Thyroid gland (tissue), 4 donors: ENCODE measurements at regions of chr1 and their contacts with region 1.

Region 1: GRCh38 chr1:61043010-61043820 is 39.1 kb upstream of the NFIA start:
- DNase-seq: peak; percentile 89 to 94
- H3K4me3 ChIP-seq: peak overlapping the region in 2 of 3 donors; percentile 11 to 64
- H3K27ac ChIP-seq: peak overlapping the region; percentile 25 to 91 (median 83)
- H3K4me1 ChIP-seq: peaks cover 3 to 8% of the 10 kb centered on the region in 2 donors
- H3K27me3 ChIP-seq: no peaks in the 10 kb centered on the region
- CTCF ChIP-seq: peak; percentile 77 to 92 (median 89)
- POLR2A ChIP-seq: peak in 1 of 2 donors; percentile 48

Region 2: GRCh38 chr1:59506952-59507351 is 1536.3 kb before region 1 on chr1:
- intact Hi-C with region 1: no loop called
- DNase-seq: peak in 1 of 2 donors; percentile 32
- H3K4me3 ChIP-seq: no peak overlapping the region
- H3K27ac ChIP-seq: peak overlapping the region in 1 of 3 donors; percentile 11
- H3K4me1 ChIP-seq: peaks cover 21 to 24% of the 10 kb centered on the region in 2 donors
- H3K27me3 ChIP-seq: no peaks in the 10 kb centered on the region
- CTCF ChIP-seq: no peak
- POLR2A ChIP-seq: no peak

Region 3: DNA sequence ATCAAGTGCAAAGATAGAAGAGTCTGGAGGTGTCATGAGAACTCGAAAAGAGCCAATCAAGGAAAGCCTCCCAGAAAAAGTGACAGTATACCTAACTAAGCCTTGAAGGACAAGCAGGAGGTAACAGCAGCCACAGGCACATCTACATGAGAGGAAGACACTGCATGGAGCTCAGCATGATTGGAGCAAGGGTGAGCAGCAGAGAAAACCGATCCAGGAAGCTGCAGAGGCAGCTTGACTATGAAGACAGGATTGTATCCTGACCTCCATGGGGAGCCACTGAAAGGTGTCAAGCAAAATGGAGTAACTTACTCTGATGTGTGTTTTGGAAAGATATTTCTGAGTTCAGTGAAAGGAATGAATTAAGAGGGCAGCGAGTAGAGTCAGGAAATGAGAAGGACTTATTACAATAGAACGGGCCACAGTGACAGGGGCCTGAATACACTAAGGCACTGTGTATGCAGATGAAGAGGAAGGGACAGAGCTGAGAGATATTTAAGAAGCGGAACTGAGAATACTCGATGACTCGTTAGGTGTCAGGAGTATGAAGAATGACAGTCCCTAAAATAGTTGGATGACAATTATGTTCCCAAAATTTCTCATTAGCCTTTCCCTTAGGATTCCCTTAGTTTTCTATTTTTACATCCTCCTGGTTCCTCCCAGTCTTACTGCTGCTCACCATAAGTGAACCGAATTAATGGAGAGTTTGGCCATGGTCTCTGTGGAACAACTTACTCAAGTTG is 100.1 kb before region 1 on chr1:
- intact Hi-C with region 1: no loop called
- DNase-seq: no peak
- H3K4me3 ChIP-seq: no peak overlapping the region
- H3K27ac ChIP-seq: no peak overlapping the region
- H3K4me1 ChIP-seq: peaks cover under 1 to 2% of the 10 kb centered on the region in 2 donors
- H3K27me3 ChIP-seq: no peaks in the 10 kb centered on the region
- CTCF ChIP-seq: no peak
- POLR2A ChIP-seq: no peak

Region 4: DNA sequence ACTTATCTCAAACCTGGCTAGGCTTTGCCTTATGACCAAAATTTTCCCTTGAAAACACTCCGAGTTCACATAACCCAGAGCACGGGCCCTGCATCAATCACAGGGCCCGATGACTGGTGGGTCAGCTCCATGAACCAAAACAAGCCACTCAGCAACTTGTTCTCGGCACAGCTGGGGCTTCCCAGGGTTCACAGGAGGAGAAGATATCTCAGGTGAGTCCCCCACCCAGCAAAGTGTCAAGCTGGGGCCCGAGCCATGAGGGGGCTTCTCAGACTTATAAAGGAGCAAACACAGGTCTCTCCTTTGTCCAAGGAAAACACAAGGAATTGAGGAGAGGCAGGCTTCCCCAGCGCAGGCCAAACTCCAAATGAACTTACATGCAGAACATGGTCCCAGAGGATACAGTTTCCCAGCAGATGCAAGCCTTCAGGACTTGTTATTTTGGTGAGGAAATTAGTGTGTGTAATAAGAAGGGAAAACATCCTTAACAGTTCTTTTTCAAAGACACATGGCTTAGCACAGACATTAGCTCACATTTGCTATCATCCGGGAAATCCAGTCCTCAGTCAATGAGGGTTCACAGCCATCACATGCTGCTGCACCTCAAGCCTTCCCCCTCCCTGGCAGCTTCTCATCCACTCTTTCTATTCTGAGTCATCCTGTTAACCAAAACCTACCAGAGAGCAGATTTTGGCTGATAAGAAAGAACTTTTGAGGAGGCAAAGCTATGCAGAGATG is 59.0 kb before region 1 on chr1:
- intact Hi-C with region 1: loop called (anchors 5 kb)
- DNase-seq: no peak
- H3K4me3 ChIP-seq: no peak overlapping the region
- H3K27ac ChIP-seq: peak overlapping the region in 2 of 3 donors; percentile 6 to 48
- H3K4me1 ChIP-seq: peaks cover 0 to 3% of the 10 kb centered on the region in 2 donors
- H3K27me3 ChIP-seq: no peaks in the 10 kb centered on the region
- CTCF ChIP-seq: no peak
- POLR2A ChIP-seq: no peak

Region 5: DNA sequence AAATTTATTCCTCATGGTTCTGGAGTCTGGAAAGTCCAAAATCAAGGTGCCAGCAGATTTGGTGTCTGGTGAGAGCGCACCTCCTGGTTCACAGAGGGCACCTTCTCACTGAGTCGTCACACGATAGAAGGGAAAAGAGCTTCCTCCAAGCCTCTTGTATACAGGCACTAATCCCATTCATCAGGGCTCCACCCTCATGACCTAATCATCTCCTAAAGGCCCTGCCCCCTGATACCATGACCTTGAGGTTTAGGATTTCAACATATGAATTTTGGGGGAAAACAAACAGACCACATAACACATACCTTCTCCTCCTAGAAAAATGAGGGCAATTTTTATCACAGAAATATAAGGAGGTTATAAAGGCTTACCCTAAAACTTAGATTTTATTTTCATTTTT is 48.8 kb before region 1 on chr1:
- intact Hi-C with region 1: no loop called
- DNase-seq: no peak
- H3K4me3 ChIP-seq: no peak overlapping the region
- H3K27ac ChIP-seq: no peak overlapping the region
- H3K4me1 ChIP-seq: peaks cover 3 to 18% of the 10 kb centered on the region in 2 donors
- H3K27me3 ChIP-seq: no peaks in the 10 kb centered on the region
- CTCF ChIP-seq: no peak
- POLR2A ChIP-seq: no peak

Region 6: DNA sequence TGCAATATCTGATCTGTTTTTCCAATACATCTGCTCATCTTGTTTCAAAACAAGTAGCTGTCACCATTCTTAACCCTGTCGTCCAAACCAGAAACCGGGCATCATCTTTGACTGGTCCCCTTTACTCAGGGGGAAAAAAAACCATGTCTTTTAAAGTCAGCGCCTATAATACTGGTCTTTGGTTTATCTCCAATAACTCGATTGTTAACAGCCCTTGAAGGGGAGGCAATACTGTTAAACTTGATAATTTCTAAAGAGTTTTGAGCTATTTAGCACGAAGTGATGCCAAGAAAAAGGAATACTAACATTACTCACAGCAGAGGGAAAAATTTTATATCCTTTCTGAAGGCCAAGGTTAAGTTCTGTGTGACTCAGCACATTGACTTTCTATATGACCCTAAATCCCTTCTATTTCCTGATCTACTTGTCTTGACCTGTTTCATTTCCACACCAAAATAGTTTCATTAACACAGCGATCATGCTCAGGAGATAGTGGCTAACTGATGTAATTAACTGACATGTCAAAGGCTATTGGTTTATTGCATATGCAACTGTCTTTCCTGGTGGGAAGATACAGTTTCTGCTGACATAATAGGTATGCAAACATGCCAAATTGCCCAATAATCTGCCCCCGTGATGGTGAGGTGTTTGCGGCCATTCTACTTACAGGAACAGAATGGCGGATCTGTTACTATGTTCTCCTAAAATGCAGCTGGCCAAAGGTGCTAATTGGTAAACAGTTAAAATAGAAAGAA is 98.2 kb after region 1 on chr1:
- intact Hi-C with region 1: no loop called
- DNase-seq: no peak
- H3K4me3 ChIP-seq: no peak overlapping the region
- H3K27ac ChIP-seq: peak overlapping the region; percentile 60 to 84 (median 64)
- H3K4me1 ChIP-seq: peaks cover 73 to 89% of the 10 kb centered on the region in 2 donors
- H3K27me3 ChIP-seq: no peaks in the 10 kb centered on the region
- CTCF ChIP-seq: no peak
- POLR2A ChIP-seq: no peak